CD8-positive, alpha-beta T cell (primary cell): ENCODE measurements at regions of chr7 and their contacts with region 1.

Region 1: GRCh38 chr7:29345600-29345999 is 151.0 kb downstream of the CHN2 start:
- DNase-seq: peak in 6 of 9 experiments; percentile 15 to 55 (median 40)
- ATAC-seq: peak; percentile 48
- H3K4me3 ChIP-seq: no peak overlapping the region
- H3K4me3 Mint-ChIP-seq: no peak overlapping the region
- H3K27ac ChIP-seq: no peak overlapping the region
- H3K27ac Mint-ChIP-seq: no peak overlapping the region
- H3K4me1 ChIP-seq: peaks cover 11% of the 10 kb centered on the region
- H3K4me1 Mint-ChIP-seq: peaks cover 4% of the 10 kb centered on the region
- H3K27me3 ChIP-seq: no peaks in the 10 kb centered on the region
- H3K27me3 Mint-ChIP-seq: no peaks in the 10 kb centered on the region
- CTCF ChIP-seq: no peak

Region 2: DNA sequence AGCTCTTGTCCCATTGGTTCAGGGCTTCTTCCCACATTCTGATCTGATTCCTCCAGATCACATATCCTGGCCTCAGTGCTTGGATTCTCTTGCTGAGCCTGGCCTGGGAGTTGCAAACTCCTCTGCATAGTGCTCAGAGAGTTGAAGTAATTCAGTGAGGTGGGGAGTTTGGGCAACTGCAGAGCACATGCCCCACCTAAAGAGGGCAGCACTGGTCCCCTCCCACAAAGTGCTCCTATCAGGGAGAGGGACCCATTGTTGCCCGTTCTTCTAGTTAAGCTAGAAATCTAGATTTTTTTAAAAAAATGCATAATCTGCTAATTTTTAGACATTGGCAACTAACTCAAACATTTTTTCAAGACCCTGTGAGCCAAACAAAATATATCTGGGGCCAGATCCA is 106.0 kb before region 1 on chr7:
- CTCF ChIA-PET with region 1: no interaction called
- POLR2A ChIA-PET with region 1: no interaction called
- intact Hi-C with region 1: loop called in 1 of 2 experiments (anchors 5 kb)
- DNase-seq: peak in 2 of 9 experiments; percentile 34 to 47
- ATAC-seq: no peak
- H3K4me3 ChIP-seq: no peak overlapping the region
- H3K4me3 Mint-ChIP-seq: no peak overlapping the region
- H3K27ac ChIP-seq: no peak overlapping the region
- H3K27ac Mint-ChIP-seq: no peak overlapping the region
- H3K4me1 ChIP-seq: no peaks in the 10 kb centered on the region
- H3K4me1 Mint-ChIP-seq: peaks cover 15% of the 10 kb centered on the region
- H3K27me3 ChIP-seq: no peaks in the 10 kb centered on the region
- H3K27me3 Mint-ChIP-seq: no peaks in the 10 kb centered on the region
- CTCF ChIP-seq: peak; percentile 34

Region 3: DNA sequence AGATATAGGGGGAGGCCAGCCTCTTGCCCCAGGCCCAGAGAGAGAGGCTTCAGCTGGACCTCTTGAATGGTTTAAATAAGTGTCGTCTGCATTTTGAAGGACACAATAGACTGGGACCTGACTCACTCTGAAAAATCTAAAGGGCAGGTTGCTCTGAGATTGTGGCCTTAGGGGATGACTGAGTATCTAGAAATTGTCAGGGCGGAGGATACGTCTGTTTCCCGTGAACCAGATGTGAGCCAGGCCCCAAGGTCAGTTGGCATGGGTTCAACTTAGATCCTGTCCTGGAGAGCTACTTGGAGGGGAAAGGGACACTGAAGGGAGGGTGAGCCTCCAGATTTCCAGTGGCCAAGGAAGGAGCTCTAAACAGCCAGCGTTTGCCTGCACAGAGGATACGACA is 40.8 kb before region 1 on chr7:
- CTCF ChIA-PET with region 1: no interaction called
- POLR2A ChIA-PET with region 1: no interaction called
- intact Hi-C with region 1: no loop called
- DNase-seq: no peak
- ATAC-seq: no peak
- H3K4me3 ChIP-seq: no peak overlapping the region
- H3K4me3 Mint-ChIP-seq: no peak overlapping the region
- H3K27ac ChIP-seq: no peak overlapping the region
- H3K27ac Mint-ChIP-seq: no peak overlapping the region
- H3K4me1 ChIP-seq: no peaks in the 10 kb centered on the region
- H3K4me1 Mint-ChIP-seq: no peaks in the 10 kb centered on the region
- H3K27me3 ChIP-seq: no peaks in the 10 kb centered on the region
- H3K27me3 Mint-ChIP-seq: no peaks in the 10 kb centered on the region
- CTCF ChIP-seq: no peak

Region 4: DNA sequence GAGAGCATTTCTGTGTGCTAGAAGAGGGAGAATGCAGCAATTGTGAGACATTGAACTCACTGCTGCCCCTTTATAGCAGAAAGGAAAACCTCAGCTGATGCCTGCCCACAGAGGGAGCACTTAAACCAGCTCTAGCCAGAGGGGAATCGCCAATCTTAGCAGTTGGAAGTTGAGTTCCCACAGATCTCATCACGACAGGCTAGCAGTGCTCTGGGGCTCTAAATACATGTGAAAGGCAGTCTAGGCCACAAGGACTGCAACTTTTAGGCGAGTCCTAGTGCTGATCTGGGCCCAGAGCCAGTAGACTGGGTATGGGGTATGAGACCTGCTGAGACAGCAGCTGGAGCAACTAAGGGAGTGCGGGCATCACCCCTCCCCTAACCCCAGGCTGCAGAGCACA is 192.8 kb after region 1 on chr7:
- CTCF ChIA-PET with region 1: no interaction called
- POLR2A ChIA-PET with region 1: no interaction called
- intact Hi-C with region 1: no loop called
- DNase-seq: no peak
- ATAC-seq: no peak
- H3K4me3 ChIP-seq: no peak overlapping the region
- H3K4me3 Mint-ChIP-seq: no peak overlapping the region
- H3K27ac ChIP-seq: no peak overlapping the region
- H3K27ac Mint-ChIP-seq: no peak overlapping the region
- H3K4me1 ChIP-seq: no peaks in the 10 kb centered on the region
- H3K4me1 Mint-ChIP-seq: no peaks in the 10 kb centered on the region
- H3K27me3 ChIP-seq: no peaks in the 10 kb centered on the region
- H3K27me3 Mint-ChIP-seq: peaks cover 30% of the 10 kb centered on the region
- CTCF ChIP-seq: no peak

Region 5: DNA sequence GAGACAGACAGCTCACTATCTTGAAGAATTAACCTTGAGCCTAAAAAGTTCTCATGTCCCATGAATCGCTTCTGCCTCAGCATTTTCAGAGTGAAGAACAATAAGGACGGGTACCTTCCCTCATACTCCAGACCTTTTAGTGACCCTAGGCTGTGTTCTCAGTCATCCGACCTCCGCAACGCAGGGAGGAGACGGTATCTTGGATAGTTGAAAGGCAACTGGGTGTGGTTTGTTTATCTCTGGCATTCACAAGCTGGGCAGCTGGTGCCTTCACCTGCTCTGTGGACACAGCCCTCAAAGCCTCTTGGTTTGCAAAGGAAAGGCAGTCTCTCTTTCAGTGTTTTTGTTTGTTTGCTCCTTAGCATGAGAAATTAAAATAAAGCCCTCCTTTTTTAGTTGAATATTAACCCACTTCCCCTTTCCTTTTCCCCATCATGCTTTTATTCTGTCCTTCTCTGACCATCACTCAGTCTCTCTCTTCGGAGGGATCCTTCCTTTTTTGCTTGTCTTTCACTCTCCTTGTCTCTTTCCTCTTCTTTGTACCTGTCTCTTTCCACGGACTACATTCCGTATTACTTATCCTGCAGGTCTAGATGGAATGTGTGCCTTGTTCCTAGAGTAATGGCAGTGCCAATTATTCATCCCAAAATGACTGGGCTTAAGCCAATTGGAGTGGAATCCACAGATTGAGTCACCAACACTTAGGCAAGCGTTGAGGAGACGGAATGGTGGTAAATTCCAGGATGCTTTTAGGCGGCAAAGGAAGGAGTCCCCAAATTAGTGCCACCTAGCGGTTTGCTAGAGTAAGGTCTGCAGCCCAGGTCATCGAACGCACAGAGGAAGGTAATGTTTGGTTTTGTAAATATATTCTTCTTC is 263.8 kb after region 1 on chr7:
- CTCF ChIA-PET with region 1: no interaction called
- POLR2A ChIA-PET with region 1: no interaction called
- intact Hi-C with region 1: no loop called
- DNase-seq: no peak
- ATAC-seq: no peak
- H3K4me3 ChIP-seq: no peak overlapping the region
- H3K4me3 Mint-ChIP-seq: no peak overlapping the region
- H3K27ac ChIP-seq: no peak overlapping the region
- H3K27ac Mint-ChIP-seq: no peak overlapping the region
- H3K4me1 ChIP-seq: no peaks in the 10 kb centered on the region
- H3K4me1 Mint-ChIP-seq: no peaks in the 10 kb centered on the region
- H3K27me3 ChIP-seq: no peaks in the 10 kb centered on the region
- H3K27me3 Mint-ChIP-seq: peaks cover 9% of the 10 kb centered on the region
- CTCF ChIP-seq: no peak